GM12878 (cell line): ENCODE measurements at regions of chr10 and their contacts with region 1.

Region 1: GRCh38 chr10:132142411-132143161 is 44.2 kb upstream of the DPYSL4 start:
- DNase-seq: no peak
- ATAC-seq: peak; percentile 77
- H3K4me3 ChIP-seq: no peak overlapping the region
- H3K27ac ChIP-seq: no peak overlapping the region
- H3K4me1 ChIP-seq: no peaks in the 10 kb centered on the region
- H3K27me3 ChIP-seq: no peaks in the 10 kb centered on the region
- CTCF ChIP-seq: peak; percentile 61 to 85 (median 72)
- EP300 ChIP-seq: no peak
- POLR2A ChIP-seq: no peak
- RAD21 ChIP-seq: peak; percentile 72

Region 2: GRCh38 chr10:131885391-131886161 is 257.0 kb before region 1 on chr10:
- CTCF ChIA-PET with region 1: interaction called, 7 read pairs
- POLR2A ChIA-PET with region 1: no interaction called
- RAD21 ChIA-PET with region 1: no interaction called
- SMC1A ChIA-PET with region 1: no interaction called
- in situ Hi-C with region 1: loop called (anchors 5 kb)
- intact Hi-C with region 1: loop called (anchors 1 kb)
- DNase-seq: no peak
- ATAC-seq: peak; percentile 100
- H3K4me3 ChIP-seq: no peak overlapping the region
- H3K27ac ChIP-seq: no peak overlapping the region
- H3K4me1 ChIP-seq: no peaks in the 10 kb centered on the region
- H3K27me3 ChIP-seq: no peaks in the 10 kb centered on the region
- CTCF ChIP-seq: peak; percentile 94 to 97 (median 94)
- EP300 ChIP-seq: no peak
- POLR2A ChIP-seq: no peak
- RAD21 ChIP-seq: peak; percentile 94